ENCODE measurements at regions of chr3 and their contacts with region 1.

Region 1: GRCh38 chr3:146589899-146590508 is 15.1 kb downstream of the PLSCR5 start:
- DNase-seq: no peak
- H3K4me3 ChIP-seq: no peak overlapping the region
- H3K27me3 ChIP-seq: no peaks in the 10 kb centered on the region
- CTCF ChIP-seq: peak; percentile 56

Region 2: GRCh38 chr3:146544002-146544928 is 45.7 kb before region 1 on chr3 and contains the start of gene PLSCR1:
- CTCF ChIA-PET with region 1: no interaction called
- POLR2A ChIA-PET with region 1: no interaction called
- DNase-seq: peak; percentile 77
- H3K4me3 ChIP-seq: peak within 1 kb of the TSS; percentile 79
- H3K27me3 ChIP-seq: no peaks in the 10 kb centered on the region
- CTCF ChIP-seq: no peak
- polyA plus RNA-seq, gene PLSCR1: 22.5 and 26.3 TPM in 2 replicates

Region 3: DNA sequence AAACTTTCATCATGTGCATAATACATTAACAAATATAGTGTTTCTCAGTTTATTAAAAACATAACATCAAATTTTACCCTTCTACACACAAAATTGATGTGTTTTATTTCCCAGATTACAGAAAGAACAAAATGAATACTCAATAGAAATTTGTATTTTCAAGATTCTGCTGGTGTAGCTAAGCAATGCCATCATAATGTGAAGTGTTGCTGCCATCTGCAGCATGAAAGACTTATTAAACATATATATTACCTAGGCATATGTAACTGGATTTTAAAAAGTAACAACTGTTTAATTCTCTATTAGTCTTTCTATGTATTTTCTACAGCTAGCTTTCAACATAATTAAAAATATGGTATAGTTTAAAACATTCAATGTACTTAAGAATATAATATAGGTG is 12.3 kb before region 1 on chr3:
- CTCF ChIA-PET with region 1: interaction called, 5 read pairs
- POLR2A ChIA-PET with region 1: interaction called, 11 read pairs
- DNase-seq: no peak
- H3K4me3 ChIP-seq: no peak overlapping the region
- H3K27me3 ChIP-seq: no peaks in the 10 kb centered on the region
- CTCF ChIP-seq: peak; percentile 26; the same call in 1 of the 2 replicates

Region 4: GRCh38 chr3:146605106-146605505 is 15.1 kb after region 1 on chr3 and contains the start of gene PLSCR5:
- CTCF ChIA-PET with region 1: no interaction called
- POLR2A ChIA-PET with region 1: no interaction called
- DNase-seq: no peak
- H3K4me3 ChIP-seq: no peak within 1 kb of the TSS
- H3K27me3 ChIP-seq: no peaks in the 10 kb centered on the region
- CTCF ChIP-seq: no peak
- polyA plus RNA-seq, gene PLSCR5: not detected in 2 replicates

Region 5: DNA sequence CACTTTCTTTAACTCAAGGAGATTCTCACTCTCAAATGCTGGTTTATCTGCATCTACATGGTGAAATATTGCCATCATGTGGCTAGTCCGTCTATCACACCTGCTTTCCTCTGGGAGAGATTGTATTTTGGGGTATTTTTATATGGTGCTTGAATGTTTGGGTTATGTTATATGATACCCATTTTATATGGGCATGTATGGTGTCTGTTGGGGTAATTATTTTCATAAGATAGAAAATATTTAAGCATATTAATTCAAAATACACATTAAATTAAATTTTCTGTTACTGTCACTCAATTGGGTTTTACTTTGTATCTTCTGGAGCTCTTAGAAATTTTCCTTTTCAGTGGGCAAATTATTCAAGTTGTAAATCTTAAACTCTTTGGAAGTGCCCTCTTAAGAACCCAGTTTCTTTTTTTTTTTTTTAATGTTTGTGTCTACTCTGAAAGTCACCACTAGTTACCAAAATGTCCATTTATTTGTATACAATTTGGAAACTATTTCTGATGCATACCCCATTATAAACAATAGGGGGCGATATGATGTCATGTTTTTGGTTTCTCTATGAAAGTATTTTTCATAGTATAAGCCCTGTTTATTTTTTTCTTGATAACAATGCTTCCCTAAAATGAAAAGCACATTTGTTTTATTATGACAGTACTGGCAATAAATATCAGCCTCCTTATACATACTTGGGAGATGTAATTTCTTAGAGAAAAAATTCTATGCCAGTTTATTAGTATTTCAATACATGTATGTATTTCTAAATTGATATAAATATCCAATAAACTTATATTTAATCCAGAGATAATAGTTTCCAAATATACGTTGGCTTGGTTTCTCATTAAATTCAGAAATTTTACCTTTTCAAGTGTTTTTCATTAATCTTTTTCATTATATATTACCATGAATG is 51.2 kb after region 1 on chr3:
- CTCF ChIA-PET with region 1: interaction called, 11 read pairs
- POLR2A ChIA-PET with region 1: no interaction called
- DNase-seq: peak; percentile 8
- H3K4me3 ChIP-seq: no peak overlapping the region
- H3K27me3 ChIP-seq: no peaks in the 10 kb centered on the region
- CTCF ChIP-seq: peak; percentile 54